ENCODE measurements at regions of chr1 and their contacts with region 1.

Region 1: DNA sequence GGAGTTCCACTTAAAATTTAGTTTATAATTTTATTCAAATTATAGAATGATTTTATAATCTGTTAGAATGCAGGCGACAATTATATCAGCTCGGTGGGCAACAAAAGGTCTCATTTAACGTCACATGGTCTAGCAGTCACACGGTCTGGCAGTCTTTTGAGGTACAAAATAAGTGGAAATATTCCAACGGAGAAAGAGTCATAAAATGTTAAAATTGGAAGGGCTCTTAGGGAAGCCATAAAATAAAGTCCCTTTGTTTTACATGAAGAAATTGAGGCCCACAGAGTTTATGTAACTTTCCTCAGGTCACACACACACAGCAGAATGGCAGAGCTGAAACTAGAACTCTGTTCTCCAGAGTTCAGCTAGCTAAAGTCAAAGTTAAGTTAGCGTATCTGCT is 84.4 kb upstream of the QSOX1 start:
- DNase-seq: no peak
- ATAC-seq: no peak

Region 2: DNA sequence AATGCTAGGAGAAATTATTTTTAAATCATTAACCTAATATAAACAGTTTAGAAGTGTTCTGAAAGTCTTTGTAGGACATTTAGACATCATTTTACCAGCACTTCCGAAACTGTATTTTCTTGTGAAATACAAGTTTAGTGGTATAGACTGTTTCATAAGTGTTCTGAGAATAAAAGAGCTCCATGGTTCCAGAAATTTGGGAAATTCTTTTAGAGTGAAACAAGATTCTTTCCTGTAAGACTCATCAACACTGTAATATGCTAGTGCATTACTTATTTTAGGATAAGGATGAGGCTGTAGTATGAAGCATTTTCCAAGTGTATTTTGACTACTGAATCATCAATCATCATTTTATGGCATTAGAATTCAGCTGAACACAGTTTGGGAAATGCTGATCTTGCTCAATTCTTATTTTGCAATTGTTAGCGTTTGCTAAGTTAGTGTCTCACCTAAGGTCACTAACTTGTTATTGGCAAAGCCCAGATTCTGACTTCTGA is 42.3 kb before region 1 on chr1:
- intact Hi-C with region 1: loop called in 1 of 2 experiments (anchors 10 kb)
- DNase-seq: no peak
- ATAC-seq: peak; percentile 63 to 93

Region 3: GRCh38 chr1:180229152-180229973 is 159.1 kb after region 1 on chr1:
- intact Hi-C with region 1: no loop called
- DNase-seq: peak; percentile 36
- ATAC-seq: peak; percentile 39 to 66

Measured in left cardiac atrium (tissue), 4 donors.